Sigmoid colon (tissue), 7 donors: ENCODE measurements at regions of chr7 and their contacts with region 1.

Region 1: GRCh38 chr7:24665564-24666294 is 91.5 kb downstream of the GSDME start:
- DNase-seq: no peak
- H3K4me3 ChIP-seq: no peak overlapping the region
- H3K27ac ChIP-seq: no peak overlapping the region
- H3K4me1 ChIP-seq: no peaks in the 10 kb centered on the region
- H3K27me3 ChIP-seq: no peaks in the 10 kb centered on the region
- CTCF ChIP-seq: peak; percentile 10 to 68 (median 50)
- EP300 ChIP-seq: no peak
- POLR2A ChIP-seq: no peak

Region 2: GRCh38 chr7:23570592-23571200 is 1095.0 kb before region 1 on chr7:
- intact Hi-C with region 1: loop called (anchors 10 kb)
- DNase-seq: peak; percentile 79
- H3K4me3 ChIP-seq: no peak overlapping the region
- H3K27ac ChIP-seq: no peak overlapping the region
- H3K4me1 ChIP-seq: no peaks in the 10 kb centered on the region
- H3K27me3 ChIP-seq: peaks cover 0 to 12% (median 0%) of the 10 kb centered on the region in 3 donors
- CTCF ChIP-seq: peak; percentile 65 to 81 (median 72)
- EP300 ChIP-seq: no peak
- POLR2A ChIP-seq: no peak

Region 3: DNA sequence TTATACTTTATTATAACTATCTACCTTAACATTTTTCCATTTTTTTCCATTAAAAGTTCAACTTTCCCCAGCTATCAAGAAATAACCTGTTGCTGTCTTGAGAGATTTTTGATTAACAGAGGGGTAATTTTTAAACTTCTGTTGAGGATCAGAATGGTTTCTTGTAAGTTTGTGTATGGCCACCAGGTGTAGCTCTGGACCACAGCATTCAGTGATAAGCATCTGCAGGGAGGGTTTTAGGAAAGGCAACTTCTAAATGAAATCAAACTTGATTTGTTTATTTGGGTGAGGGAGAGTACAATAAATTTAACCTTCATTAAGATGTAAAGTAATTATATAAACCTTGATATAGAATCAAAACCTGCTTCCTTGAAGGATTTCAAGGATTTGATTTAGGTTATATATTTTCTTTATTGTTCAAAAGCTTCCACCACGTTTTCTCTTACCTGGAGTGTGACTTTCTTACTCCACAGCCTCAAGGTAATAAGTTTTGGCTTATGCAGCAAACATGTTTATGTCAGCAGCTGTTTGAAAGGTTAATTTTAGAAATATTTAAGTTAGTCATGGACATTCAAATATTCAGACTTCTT is 802.4 kb before region 1 on chr7:
- intact Hi-C with region 1: loop called (anchors 10 kb)
- DNase-seq: no peak
- H3K4me3 ChIP-seq: no peak overlapping the region
- H3K27ac ChIP-seq: no peak overlapping the region
- H3K4me1 ChIP-seq: no peaks in the 10 kb centered on the region
- H3K27me3 ChIP-seq: no peaks in the 10 kb centered on the region
- CTCF ChIP-seq: peak in 3 of 4 experiments; percentile 34 to 47 (median 40)
- EP300 ChIP-seq: no peak
- POLR2A ChIP-seq: no peak

Region 4: GRCh38 chr7:24290004-24290641 is 375.6 kb before region 1 on chr7:
- intact Hi-C with region 1: loop called (anchors 10 kb)
- DNase-seq: no peak
- H3K4me3 ChIP-seq: no peak overlapping the region
- H3K27ac ChIP-seq: no peak overlapping the region
- H3K4me1 ChIP-seq: peaks cover 0 to 3% (median 1%) of the 10 kb centered on the region in 4 donors
- H3K27me3 ChIP-seq: peaks cover under 1 to 30% (median 7%) of the 10 kb centered on the region in 3 donors
- CTCF ChIP-seq: no peak
- EP300 ChIP-seq: no peak
- POLR2A ChIP-seq: no peak

Region 5: GRCh38 chr7:24401628-24402593 is 263.8 kb before region 1 on chr7:
- intact Hi-C with region 1: loop called (anchors 5 kb)
- DNase-seq: no peak
- H3K4me3 ChIP-seq: no peak overlapping the region
- H3K27ac ChIP-seq: no peak overlapping the region
- H3K4me1 ChIP-seq: no peaks in the 10 kb centered on the region
- H3K27me3 ChIP-seq: no peaks in the 10 kb centered on the region
- CTCF ChIP-seq: peak in 1 of 4 experiments; percentile 15
- EP300 ChIP-seq: no peak
- POLR2A ChIP-seq: no peak

Region 6: DNA sequence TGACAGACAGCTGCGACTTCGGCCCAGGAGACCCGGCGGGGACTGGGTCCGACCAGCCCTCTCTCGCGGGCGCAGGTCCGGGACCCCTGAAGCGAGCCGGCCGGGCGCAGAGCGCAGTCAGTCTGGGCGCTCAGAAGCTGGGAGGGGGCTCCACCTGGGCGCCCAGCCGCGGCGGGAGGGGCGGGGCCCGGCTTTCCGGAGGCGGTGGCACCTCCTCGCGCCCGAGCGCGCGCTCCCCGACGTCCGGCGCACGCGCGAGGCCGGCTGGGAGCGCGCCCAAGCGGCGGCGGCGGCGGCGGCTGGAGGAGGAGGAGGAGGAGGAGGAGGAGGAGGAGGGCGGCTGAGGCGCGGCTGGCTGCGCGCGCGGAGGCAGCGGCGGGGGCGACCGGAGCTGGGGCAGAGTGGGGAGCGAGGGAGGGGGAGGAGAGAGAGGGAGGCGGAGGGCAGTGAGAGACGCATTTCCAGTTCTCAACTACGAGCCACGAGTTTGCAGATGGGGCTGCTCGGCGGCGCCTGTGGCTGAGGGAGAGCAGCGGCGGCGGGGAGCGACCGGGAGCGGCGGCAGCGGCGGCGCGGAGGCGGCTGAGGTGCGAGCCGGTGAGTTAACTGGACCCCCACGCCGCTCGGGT is 92.6 kb before region 1 on chr7 and contains the start of gene PALS2:
- intact Hi-C with region 1: loop called (anchors 10 kb)
- DNase-seq: peak; percentile 80
- H3K4me3 ChIP-seq: peak within 1 kb of the TSS; percentile 71 to 85 (median 79)
- H3K27ac ChIP-seq: peak within 1 kb of the TSS; percentile 77 to 87 (median 82)
- H3K4me1 ChIP-seq: peaks cover 0 to 14% (median 9%) of the 10 kb centered on the region in 4 donors
- H3K27me3 ChIP-seq: no peaks in the 10 kb centered on the region
- CTCF ChIP-seq: no peak
- EP300 ChIP-seq: no peak
- POLR2A ChIP-seq: no peak
- total RNA-seq, gene PALS2: 6.9 to 14.2 (median 7.7) TPM

Region 7: GRCh38 chr7:25037325-25037724 is 371.6 kb after region 1 on chr7:
- intact Hi-C with region 1: no loop called
- DNase-seq: no peak
- H3K4me3 ChIP-seq: no peak overlapping the region
- H3K27ac ChIP-seq: no peak overlapping the region
- H3K4me1 ChIP-seq: no peaks in the 10 kb centered on the region
- H3K27me3 ChIP-seq: no peaks in the 10 kb centered on the region
- CTCF ChIP-seq: no peak
- EP300 ChIP-seq: no peak
- POLR2A ChIP-seq: no peak